Psoas muscle (tissue), 8 donors: ENCODE measurements at regions of chr2 and their contacts with region 1.

Region 1: DNA sequence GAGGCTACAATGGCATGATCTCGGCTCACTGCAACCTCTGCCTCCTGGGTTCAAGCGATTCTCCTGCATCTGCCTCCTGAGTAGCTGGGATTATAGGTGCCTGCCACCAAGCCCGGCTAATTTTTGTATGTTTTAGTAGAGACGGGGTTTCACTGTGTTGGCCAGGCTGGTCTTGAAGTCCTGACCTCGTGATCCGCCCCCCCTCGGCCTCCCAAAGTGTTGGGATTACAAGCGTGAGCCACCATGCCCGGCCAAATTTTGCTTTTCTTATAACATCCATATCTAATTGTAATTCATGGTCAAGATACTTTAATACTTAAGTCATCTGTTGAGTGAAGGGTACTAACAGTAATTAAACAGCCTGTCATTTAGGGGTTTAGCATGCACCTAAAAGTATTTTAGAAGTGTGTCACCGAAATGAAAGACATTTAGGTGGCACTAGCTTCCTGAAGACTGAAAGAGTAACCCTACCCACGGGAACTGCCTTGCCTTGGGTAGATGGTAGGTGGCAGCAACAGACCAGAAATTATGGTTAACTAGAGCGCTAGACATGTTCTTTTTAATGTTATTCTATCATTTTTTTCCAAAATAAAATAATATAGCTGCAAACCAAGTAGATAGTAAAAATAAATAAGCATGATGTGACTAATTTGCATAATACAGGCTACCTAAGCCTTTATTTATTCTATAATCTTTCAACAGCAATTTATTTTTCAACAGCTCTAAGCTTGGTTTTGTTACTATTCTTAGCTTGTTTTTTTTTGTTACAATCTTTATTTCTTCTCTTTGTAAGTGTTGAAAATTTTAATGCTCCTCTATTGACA is 8.6 kb upstream of the ACYP2 start:
- DNase-seq: no peak
- ATAC-seq: peak; percentile 55 to 93 (median 76)
- H3K4me3 ChIP-seq: peak overlapping the region; percentile 37
- H3K27ac ChIP-seq: no peak overlapping the region
- H3K4me1 ChIP-seq: peaks cover 3% of the 10 kb centered on the region
- H3K27me3 ChIP-seq: no peaks in the 10 kb centered on the region
- CTCF ChIP-seq: peak; percentile 70

Region 2: DNA sequence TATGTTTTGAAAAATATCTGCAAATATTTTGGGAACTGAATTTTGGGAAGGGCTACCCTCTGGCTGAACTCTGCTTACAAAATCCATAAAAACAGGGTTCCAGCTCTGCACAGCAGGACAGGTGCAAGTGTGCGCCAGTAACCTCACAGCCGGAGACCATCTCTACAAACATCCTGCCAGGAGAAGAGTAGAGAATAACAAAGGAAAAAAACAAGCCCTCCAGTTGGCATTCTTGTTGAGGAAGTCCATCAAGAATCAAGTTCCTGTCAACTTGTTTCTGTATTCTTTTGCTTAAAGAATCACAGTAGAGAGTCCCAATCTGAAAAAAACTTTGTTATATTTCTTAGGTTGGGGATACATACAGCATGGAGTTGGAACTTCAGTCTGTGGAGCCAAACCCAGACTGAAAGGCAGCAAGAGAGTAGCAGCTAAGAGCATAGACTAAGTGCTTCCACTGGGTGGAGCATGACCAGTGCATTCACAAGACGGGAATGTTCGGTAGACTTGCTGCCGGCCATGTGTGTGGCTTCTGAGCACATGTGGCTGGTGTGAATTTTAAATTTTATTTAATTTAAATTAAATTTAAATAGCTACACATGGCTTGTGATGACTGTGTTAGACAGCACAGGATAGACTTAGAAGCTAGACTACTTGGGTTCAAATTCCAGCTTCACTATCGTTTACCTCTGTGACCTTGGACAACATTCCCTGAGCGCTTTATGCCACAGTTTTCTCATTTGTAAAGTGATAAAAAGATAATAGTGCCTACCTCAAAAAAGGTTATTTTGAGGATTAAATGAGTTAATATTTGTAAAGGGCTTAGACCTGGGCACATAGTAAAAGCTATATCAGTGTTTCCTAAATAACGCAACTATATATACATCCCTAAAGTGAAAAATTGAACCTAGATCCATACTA is 391.2 kb after region 1 on chr2:
- intact Hi-C with region 1: loop called in 1 of 2 experiments (anchors 10 kb)
- DNase-seq: peak in 1 of 2 donors; percentile 32
- ATAC-seq: peak; percentile 63 to 85 (median 78)
- H3K4me3 ChIP-seq: no peak overlapping the region
- H3K27ac ChIP-seq: no peak overlapping the region
- H3K4me1 ChIP-seq: peaks cover 50% of the 10 kb centered on the region
- H3K27me3 ChIP-seq: no peaks in the 10 kb centered on the region
- CTCF ChIP-seq: peak; percentile 45

Region 3: GRCh38 chr2:54512663-54513362 is 406.0 kb after region 1 on chr2:
- intact Hi-C with region 1: loop called in 1 of 2 experiments (anchors 10 kb)
- DNase-seq: no peak
- ATAC-seq: peak; percentile 74 to 90 (median 86)
- H3K4me3 ChIP-seq: no peak overlapping the region
- H3K27ac ChIP-seq: peak overlapping the region; percentile 10
- H3K4me1 ChIP-seq: peaks cover 46% of the 10 kb centered on the region
- H3K27me3 ChIP-seq: no peaks in the 10 kb centered on the region
- CTCF ChIP-seq: no peak

Region 4: GRCh38 chr2:54704688-54705605 is 598.1 kb after region 1 on chr2:
- intact Hi-C with region 1: loop called (anchors 2 to 10 kb)
- DNase-seq: no peak
- ATAC-seq: peak; percentile 44 to 91 (median 74)
- H3K4me3 ChIP-seq: no peak overlapping the region
- H3K27ac ChIP-seq: no peak overlapping the region
- H3K4me1 ChIP-seq: no peaks in the 10 kb centered on the region
- H3K27me3 ChIP-seq: peaks cover 0 to 9% (median 4%) of the 10 kb centered on the region in 3 donors
- CTCF ChIP-seq: peak; percentile 62

Region 5: GRCh38 chr2:54838585-54839035 is 731.8 kb after region 1 on chr2:
- intact Hi-C with region 1: loop called in 1 of 2 experiments (anchors 2 kb)
- DNase-seq: peak; percentile 67 to 70
- ATAC-seq: peak; percentile 77 to 94 (median 86)
- H3K4me3 ChIP-seq: no peak overlapping the region
- H3K27ac ChIP-seq: no peak overlapping the region
- H3K4me1 ChIP-seq: no peaks in the 10 kb centered on the region
- H3K27me3 ChIP-seq: no peaks in the 10 kb centered on the region
- CTCF ChIP-seq: peak; percentile 93